Activated CD4-positive, alpha-beta T cell treated with anti-CD3 and anti-CD28 coated beads for 36 hours (primary cell): ENCODE measurements at regions of chr6 and their contacts with region 1.

Region 1: DNA sequence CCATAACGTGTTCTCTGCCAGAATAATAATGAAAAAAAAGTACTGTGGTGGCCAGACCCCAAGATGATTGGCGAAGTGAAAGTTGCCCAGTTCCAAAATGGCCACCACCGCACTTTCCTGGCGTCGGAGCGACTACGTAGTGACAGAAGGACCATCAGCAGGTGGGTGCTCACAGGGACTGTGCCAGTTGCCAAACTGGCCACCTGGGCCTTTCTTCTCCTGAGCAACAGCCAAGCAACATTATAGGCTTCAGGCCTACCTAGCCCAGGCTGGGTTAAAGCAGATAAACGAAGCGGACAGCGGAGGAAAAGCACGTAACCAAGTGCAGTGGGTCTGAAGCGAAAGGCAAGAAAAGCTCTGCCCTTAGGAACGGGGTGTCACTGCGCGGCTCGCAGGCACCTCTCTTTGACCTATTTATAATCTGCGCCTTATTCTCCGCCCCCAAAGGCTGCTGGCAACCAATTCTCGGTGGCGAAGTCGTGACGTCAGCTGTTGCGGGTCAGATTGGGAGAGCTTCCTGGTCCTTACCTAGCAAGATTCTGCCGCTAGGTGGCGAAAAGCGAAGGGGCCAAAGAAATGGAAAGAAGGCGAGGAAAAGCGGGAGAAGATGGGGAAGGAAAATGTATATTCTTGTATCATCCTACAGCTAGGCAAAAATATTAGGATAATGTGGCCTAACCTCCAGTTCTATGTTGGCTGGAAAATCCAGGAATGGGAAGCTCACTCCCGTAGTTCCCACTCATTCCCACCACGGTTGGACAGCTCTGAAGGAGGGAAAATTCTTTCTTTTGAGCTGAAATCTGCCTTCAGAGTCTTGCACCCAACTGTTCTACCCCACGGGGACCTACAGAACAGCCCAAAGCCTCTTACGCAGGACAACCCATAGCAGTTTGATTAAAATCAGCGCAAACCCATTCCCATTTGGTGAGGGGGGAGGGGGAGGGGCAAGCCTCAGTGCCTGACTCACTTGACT is 6.9 kb upstream of the MOG start:
- DNase-seq: peak; percentile 99
- ATAC-seq: peak; percentile 97
- H3K4me3 Mint-ChIP-seq: peak overlapping the region; percentile 80
- H3K27ac Mint-ChIP-seq: peak overlapping the region; percentile 97
- H3K4me1 Mint-ChIP-seq: peaks cover 10% of the 10 kb centered on the region
- H3K27me3 Mint-ChIP-seq: peaks cover 2% of the 10 kb centered on the region

Region 2: DNA sequence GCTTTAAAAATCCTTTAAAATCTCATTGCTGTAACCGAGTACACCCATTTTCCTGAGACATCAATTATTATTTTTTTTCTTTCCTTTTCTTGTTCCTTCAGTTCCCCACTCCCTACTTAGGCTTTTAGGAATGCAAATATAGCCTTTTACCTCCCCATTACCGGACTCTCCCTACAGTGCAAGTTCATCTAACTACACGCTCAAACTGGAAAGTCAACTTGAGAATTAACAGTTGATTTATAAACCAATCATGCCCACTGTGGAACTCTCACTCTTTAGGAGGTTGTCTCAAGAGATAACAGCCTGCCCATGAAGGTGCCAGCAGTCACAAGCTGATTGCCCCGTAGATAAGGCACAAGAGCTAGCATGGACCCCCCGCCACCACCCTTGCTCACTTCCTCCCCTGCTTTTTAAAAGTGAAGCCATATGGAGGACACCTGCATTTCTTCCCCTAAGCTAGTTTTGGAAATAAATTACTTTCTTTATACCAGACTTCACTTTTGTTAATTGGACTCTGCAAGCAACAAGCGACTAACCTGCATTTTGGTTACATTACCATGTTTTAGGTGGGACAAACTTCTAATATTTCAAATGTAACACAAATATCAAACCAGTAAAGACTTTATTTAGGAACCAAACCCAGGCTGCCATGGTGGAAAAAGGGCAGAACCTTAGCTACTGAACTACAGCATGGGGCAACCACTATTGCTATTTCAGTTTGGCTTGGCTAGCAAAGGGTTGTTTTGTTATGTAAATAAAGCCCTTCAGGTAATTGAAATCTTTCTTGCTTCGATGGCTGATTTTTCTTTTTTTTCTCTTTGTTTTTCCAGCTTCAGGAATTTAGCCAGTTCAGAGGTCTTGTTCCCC is 125.3 kb before region 1 on chr6:
- CTCF ChIA-PET with region 1: no interaction called
- POLR2A ChIA-PET with region 1: no interaction called
- intact Hi-C with region 1: no loop called
- DNase-seq: no peak
- ATAC-seq: no peak
- H3K4me3 Mint-ChIP-seq: no peak overlapping the region
- H3K27ac Mint-ChIP-seq: no peak overlapping the region
- H3K4me1 Mint-ChIP-seq: no peaks in the 10 kb centered on the region
- H3K27me3 Mint-ChIP-seq: peaks cover 33% of the 10 kb centered on the region

Region 3: DNA sequence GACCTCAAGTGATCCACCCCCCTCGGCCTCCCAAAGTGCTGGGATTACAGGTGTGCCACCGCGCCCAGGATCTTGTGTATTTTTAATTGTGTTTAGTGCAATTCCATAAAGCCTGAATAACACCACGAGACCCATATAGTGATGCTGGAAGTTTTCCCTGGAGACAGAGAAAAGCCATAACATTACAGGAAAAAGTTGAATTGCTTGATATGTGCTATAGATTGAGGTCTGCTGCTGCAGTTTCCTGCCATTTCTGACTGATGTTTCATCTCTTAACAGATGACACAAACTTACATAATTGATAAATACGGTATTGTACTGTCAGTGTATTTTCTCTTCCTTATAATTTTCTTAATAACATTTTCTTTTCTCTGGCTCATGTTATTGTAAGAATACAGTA is 83.1 kb before region 1 on chr6:
- CTCF ChIA-PET with region 1: no interaction called
- POLR2A ChIA-PET with region 1: no interaction called
- intact Hi-C with region 1: no loop called
- DNase-seq: no peak
- ATAC-seq: no peak
- H3K4me3 Mint-ChIP-seq: no peak overlapping the region
- H3K27ac Mint-ChIP-seq: no peak overlapping the region
- H3K4me1 Mint-ChIP-seq: no peaks in the 10 kb centered on the region
- H3K27me3 Mint-ChIP-seq: peaks cover 48% of the 10 kb centered on the region

Region 4: GRCh38 chr6:29617782-29618557 is 32.0 kb before region 1 on chr6:
- CTCF ChIA-PET with region 1: interaction called, 84 read pairs
- POLR2A ChIA-PET with region 1: no interaction called
- intact Hi-C with region 1: no loop called
- DNase-seq: peak; percentile 26
- ATAC-seq: no peak
- H3K4me3 Mint-ChIP-seq: no peak overlapping the region
- H3K27ac Mint-ChIP-seq: no peak overlapping the region
- H3K4me1 Mint-ChIP-seq: no peaks in the 10 kb centered on the region
- H3K27me3 Mint-ChIP-seq: no peaks in the 10 kb centered on the region

Region 5: DNA sequence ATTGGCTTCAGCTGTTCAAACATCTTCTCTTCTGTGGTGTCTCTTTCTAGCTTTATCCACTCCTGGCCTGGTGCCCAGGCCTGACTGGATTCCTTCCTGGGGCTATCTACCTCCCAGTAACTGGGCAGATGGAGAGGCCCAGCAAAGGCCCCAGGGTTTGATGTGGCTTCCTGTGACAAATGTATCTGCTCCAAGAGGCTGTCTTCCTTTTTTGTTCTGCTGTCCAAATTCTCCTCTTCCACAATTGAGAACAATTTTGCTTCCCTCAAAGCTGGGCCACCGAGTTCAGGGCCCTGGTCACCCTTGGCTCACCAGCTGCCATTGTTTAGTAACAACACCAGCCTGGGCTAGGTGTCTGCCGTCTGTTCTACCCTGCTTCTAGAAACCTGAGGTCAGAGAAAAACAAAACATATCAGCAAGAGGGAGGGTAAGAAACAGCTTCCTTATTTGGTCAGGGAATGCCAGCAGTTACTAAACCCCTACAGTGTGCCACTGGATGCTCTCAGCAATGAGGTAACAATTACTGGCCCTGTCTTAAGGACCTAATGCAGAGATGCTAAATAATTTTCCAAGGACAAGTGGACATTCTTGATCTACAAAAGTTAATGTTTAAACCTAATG is 27.1 kb after region 1 on chr6:
- CTCF ChIA-PET with region 1: interaction called, 21 read pairs
- POLR2A ChIA-PET with region 1: no interaction called
- intact Hi-C with region 1: no loop called
- DNase-seq: peak; percentile 5
- ATAC-seq: no peak
- H3K4me3 Mint-ChIP-seq: no peak overlapping the region
- H3K27ac Mint-ChIP-seq: no peak overlapping the region
- H3K4me1 Mint-ChIP-seq: peaks cover 8% of the 10 kb centered on the region
- H3K27me3 Mint-ChIP-seq: no peaks in the 10 kb centered on the region

Region 6: GRCh38 chr6:29723262-29723665 is 73.3 kb after region 1 on chr6 and contains the start of gene HLA-F:
- CTCF ChIA-PET with region 1: interaction called, 6 read pairs
- POLR2A ChIA-PET with region 1: no interaction called
- intact Hi-C with region 1: loop called (anchors 5 kb)
- DNase-seq: peak; percentile 88
- ATAC-seq: peak; percentile 89
- H3K4me3 Mint-ChIP-seq: peak within 1 kb of the TSS; percentile 92
- H3K27ac Mint-ChIP-seq: peak within 1 kb of the TSS; percentile 94
- H3K4me1 Mint-ChIP-seq: peaks cover 49% of the 10 kb centered on the region
- H3K27me3 Mint-ChIP-seq: no peaks in the 10 kb centered on the region
- total RNA-seq, gene HLA-F: 216 to 229 TPM

Region 7: GRCh38 chr6:29926413-29927274 is 276.7 kb after region 1 on chr6:
- CTCF ChIA-PET with region 1: no interaction called
- POLR2A ChIA-PET with region 1: no interaction called
- intact Hi-C with region 1: loop called in 1 of 2 experiments (anchors 5 kb)
- DNase-seq: peak; percentile 92
- ATAC-seq: peak; percentile 91
- H3K4me3 Mint-ChIP-seq: peak overlapping the region; percentile 82
- H3K27ac Mint-ChIP-seq: peak overlapping the region; percentile 94
- H3K4me1 Mint-ChIP-seq: peaks cover 32% of the 10 kb centered on the region
- H3K27me3 Mint-ChIP-seq: no peaks in the 10 kb centered on the region

Region 8: GRCh38 chr6:30571075-30571768 is 921.2 kb after region 1 on chr6 and contains the start of gene ABCF1:
- CTCF ChIA-PET with region 1: no interaction called
- POLR2A ChIA-PET with region 1: interaction called, 13 read pairs
- intact Hi-C with region 1: no loop called
- DNase-seq: peak; percentile 100
- ATAC-seq: peak; percentile 86
- H3K4me3 Mint-ChIP-seq: peak within 1 kb of the TSS; percentile 94
- H3K27ac Mint-ChIP-seq: peak within 1 kb of the TSS; percentile 100
- H3K4me1 Mint-ChIP-seq: peaks cover 62% of the 10 kb centered on the region
- H3K27me3 Mint-ChIP-seq: no peaks in the 10 kb centered on the region
- total RNA-seq, gene ABCF1: 100.0 to 105 TPM